Heart left ventricle (tissue), 16 donors: ENCODE measurements at regions of chr9 and their contacts with region 1.

Region 1: DNA sequence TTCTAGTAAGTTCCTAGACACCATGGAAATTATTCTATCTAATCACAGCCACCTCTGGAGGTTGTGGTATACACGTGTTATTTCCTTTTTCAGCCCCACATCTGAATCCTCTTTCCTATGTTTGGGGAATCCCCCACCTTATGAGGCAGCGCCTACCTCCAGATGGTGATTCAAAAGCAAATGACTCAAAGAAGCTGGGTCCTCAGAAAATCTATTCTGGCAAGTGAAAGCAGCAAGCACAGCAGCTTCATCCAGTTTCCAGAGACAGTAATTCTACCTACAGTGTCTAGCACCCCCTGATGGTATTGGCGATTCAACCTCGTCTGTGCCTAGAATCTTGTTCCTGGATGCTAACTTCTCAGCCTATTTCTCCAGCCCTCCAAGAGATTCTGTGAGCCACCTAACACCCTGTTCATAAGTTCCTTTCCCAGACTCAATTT is 43.0 kb downstream of the STRBP start:
- DNase-seq: peak in 1 of 5 donors; percentile 9
- ATAC-seq: peak in 2 of 4 donors; percentile 50 to 60
- H3K4me3 ChIP-seq: no peak overlapping the region
- H3K27ac ChIP-seq: no peak overlapping the region
- H3K4me1 ChIP-seq: peaks cover 0 to 10% (median 0%) of the 10 kb centered on the region in 12 donors
- H3K27me3 ChIP-seq: no peaks in the 10 kb centered on the region
- CTCF ChIP-seq: peak in 11 of 12 donors; percentile 21 to 56 (median 41)
- POLR2A ChIP-seq: no peak

Region 2: DNA sequence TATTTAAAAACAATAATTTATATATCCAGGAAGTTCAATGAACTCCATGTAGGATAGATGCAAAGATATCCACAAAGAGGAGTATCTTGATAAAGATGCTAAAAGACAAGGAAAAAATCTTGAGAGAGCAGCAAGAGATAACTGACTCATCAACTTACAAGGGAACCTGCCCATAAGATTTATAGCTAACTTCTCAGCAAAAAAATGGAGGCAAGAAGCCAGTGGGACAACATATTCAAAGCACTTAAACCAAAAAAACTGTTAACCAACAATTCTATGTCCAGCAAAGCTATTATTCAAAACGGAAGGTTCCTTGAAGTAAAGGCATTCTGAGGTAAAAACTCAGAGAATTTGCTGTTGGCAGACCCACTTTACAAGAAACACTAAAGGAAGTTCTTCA is 264.3 kb before region 1 on chr9:
- intact Hi-C with region 1: no loop called
- DNase-seq: no peak
- ATAC-seq: no peak
- H3K4me3 ChIP-seq: no peak overlapping the region
- H3K27ac ChIP-seq: no peak overlapping the region
- H3K4me1 ChIP-seq: peaks cover 0 to 10% (median 0%) of the 10 kb centered on the region in 12 donors
- H3K27me3 ChIP-seq: no peaks in the 10 kb centered on the region
- CTCF ChIP-seq: no peak
- POLR2A ChIP-seq: no peak

Region 3: GRCh38 chr9:123081824-123082223 is 143.6 kb before region 1 on chr9:
- intact Hi-C with region 1: loop called in 3 of 10 experiments (anchors 10 kb)
- DNase-seq: no peak
- ATAC-seq: peak in 1 of 4 donors; percentile 18
- H3K4me3 ChIP-seq: no peak overlapping the region
- H3K27ac ChIP-seq: no peak overlapping the region
- H3K4me1 ChIP-seq: no peaks in the 10 kb centered on the region
- H3K27me3 ChIP-seq: no peaks in the 10 kb centered on the region
- CTCF ChIP-seq: peak; percentile 26 to 63 (median 46)
- POLR2A ChIP-seq: no peak

Region 4: DNA sequence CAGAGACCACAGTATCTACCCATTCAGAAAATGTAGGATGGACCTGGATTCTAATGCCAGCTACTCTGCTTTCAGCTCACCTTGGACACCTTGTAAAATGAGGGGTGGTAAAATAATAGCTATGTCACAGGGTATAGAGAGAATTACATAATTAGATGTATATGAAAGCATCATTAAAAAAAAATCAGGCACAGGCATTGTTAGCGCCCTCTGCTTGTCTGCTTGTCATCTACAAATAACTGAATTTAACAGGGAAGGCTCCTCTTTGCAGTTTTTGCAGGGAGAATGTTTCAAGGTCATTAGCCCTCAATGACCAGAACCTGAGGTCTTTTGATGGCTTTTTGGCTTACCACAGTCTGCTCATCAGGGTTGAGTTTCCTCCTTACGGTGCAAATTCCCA is 133.9 kb before region 1 on chr9:
- intact Hi-C with region 1: loop called in 4 of 10 experiments (anchors 10 kb)
- DNase-seq: no peak
- ATAC-seq: no peak
- H3K4me3 ChIP-seq: no peak overlapping the region
- H3K27ac ChIP-seq: no peak overlapping the region
- H3K4me1 ChIP-seq: peaks cover 0 to 7% (median 0%) of the 10 kb centered on the region in 12 donors
- H3K27me3 ChIP-seq: no peaks in the 10 kb centered on the region
- CTCF ChIP-seq: no peak
- POLR2A ChIP-seq: no peak

Region 5: DNA sequence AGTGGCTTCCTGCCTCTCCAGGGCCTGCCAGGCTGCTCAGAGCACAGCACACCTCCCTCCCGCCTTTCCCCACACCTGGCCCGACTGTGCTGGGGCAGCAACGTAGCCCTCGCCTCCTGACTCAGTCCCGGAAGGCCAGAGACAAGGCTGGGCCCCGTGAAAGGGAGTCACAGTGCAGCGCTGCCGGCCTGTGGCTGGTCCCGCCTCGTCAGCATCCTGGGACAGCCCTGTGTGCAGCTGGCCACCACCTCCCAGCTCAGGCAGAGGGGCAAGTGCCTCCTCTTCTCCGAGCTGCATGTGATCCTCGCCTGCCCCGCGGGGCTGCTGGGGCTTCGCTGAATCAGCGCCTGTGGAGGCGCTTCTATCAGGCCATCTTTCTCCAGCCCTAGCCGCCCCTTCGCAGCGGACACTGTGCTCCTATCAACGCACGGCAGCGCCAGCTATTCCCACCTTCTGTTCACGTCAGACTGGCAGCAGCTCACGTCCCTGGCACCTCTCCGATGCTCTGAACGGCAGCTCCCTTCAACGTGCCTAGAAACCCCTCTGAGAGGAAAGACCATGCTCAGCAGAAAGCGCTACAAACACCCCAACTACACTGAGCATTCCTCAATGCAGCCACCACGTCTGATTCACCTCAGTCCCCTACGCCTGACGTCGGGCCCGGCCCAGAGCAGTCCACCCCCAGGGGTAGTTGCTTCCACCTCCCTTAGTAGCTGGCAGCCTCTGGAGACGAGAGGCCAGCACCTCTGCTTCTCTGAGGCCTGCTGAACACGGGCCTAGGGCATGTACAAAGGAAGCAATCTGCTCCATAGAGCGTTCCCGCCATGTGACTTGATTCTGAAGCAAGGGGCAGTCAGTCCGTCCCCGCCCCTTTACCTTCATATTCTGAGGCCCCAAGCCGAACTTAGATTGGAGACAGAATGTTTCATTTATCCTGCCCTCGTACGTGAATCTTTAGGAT is 113.1 kb before region 1 on chr9:
- intact Hi-C with region 1: loop called in 2 of 10 experiments (anchors 10 kb)
- DNase-seq: peak in 2 of 5 donors; percentile 45 to 68
- ATAC-seq: peak; percentile 21 to 67 (median 47)
- H3K4me3 ChIP-seq: no peak overlapping the region
- H3K27ac ChIP-seq: peak overlapping the region in 6 of 12 donors; percentile 17 to 58 (median 40)
- H3K4me1 ChIP-seq: peaks cover 0 to 27% (median 12%) of the 10 kb centered on the region in 12 donors
- H3K27me3 ChIP-seq: no peaks in the 10 kb centered on the region
- CTCF ChIP-seq: no peak
- POLR2A ChIP-seq: no peak

Region 6: GRCh38 chr9:123164285-123164684 is 61.1 kb before region 1 on chr9:
- intact Hi-C with region 1: no loop called
- DNase-seq: no peak
- ATAC-seq: no peak
- H3K4me3 ChIP-seq: no peak overlapping the region
- H3K27ac ChIP-seq: no peak overlapping the region
- H3K4me1 ChIP-seq: peaks cover 0 to 9% (median 0%) of the 10 kb centered on the region in 12 donors
- H3K27me3 ChIP-seq: no peaks in the 10 kb centered on the region
- CTCF ChIP-seq: no peak
- POLR2A ChIP-seq: no peak

Region 7: GRCh38 chr9:123548741-123549545 is 323.5 kb after region 1 on chr9:
- intact Hi-C with region 1: no loop called
- DNase-seq: no peak
- ATAC-seq: peak in 3 of 4 donors; percentile 42 to 65 (median 50)
- H3K4me3 ChIP-seq: no peak overlapping the region
- H3K27ac ChIP-seq: no peak overlapping the region
- H3K4me1 ChIP-seq: peaks cover 0 to 24% (median 0%) of the 10 kb centered on the region in 12 donors
- H3K27me3 ChIP-seq: no peaks in the 10 kb centered on the region
- CTCF ChIP-seq: no peak
- POLR2A ChIP-seq: no peak